Activated naive CD4-positive, alpha-beta T cell treated with anti-CD3 and anti-CD28 coated beads for 36 hours (primary cell): ENCODE measurements at regions of chr7 and their contacts with region 1.

Region 1: GRCh38 chr7:81482600-81483186 is 287.2 kb downstream of the HGF start:
- DNase-seq: no peak
- H3K4me3 Mint-ChIP-seq: no peak overlapping the region
- H3K27ac Mint-ChIP-seq: no peak overlapping the region
- H3K4me1 Mint-ChIP-seq: no peaks in the 10 kb centered on the region
- H3K27me3 Mint-ChIP-seq: no peaks in the 10 kb centered on the region

Region 2: DNA sequence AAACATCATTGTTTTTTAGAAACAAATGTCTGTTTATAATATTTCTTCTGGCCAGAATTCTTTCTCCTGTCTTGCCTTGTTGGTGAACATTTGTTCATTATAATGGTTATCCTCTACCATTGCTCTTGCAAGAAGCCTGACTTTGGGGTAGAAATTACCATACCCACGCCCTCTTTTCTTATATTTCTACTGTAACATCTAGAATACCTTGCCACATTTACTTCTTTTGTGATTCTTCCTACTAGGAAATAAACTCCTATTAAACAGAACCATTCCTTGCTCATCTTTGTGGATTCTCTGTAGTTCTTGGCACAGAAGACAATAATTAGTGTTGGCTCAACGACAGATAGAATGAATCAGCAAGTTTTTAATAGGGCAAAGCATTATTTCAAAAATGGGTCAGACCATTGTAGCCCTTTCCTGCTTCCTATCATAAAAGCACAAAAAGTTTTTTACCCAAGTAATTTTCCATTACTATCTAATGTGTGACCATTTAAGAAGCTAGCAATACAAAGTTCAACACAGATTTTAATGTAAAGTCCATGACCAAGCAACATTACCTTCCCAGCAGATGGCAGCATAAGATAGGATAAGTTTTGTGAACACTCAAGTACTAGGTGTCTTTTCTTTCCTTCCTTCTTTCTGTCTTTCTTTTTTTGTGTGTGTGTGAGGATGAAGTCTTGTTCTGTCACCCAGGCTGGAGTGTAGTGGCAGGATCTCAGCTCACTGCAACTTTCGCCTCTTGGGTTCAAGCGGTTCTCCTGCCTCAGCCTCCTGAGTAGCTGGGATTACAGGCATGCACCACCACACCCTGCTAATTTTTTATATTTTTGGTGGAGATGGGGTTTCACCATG is 16.8 kb after region 1 on chr7:
- CTCF ChIA-PET with region 1: interaction called, 12 read pairs
- intact Hi-C with region 1: no loop called
- DNase-seq: no peak
- H3K4me3 Mint-ChIP-seq: no peak overlapping the region
- H3K27ac Mint-ChIP-seq: no peak overlapping the region
- H3K4me1 Mint-ChIP-seq: no peaks in the 10 kb centered on the region
- H3K27me3 Mint-ChIP-seq: no peaks in the 10 kb centered on the region

Region 3: GRCh38 chr7:82017334-82017943 is 534.7 kb after region 1 on chr7:
- CTCF ChIA-PET with region 1: no interaction called
- intact Hi-C with region 1: loop called (anchors 10 kb)
- DNase-seq: no peak
- H3K4me3 Mint-ChIP-seq: no peak overlapping the region
- H3K27ac Mint-ChIP-seq: no peak overlapping the region
- H3K4me1 Mint-ChIP-seq: no peaks in the 10 kb centered on the region
- H3K27me3 Mint-ChIP-seq: no peaks in the 10 kb centered on the region

Region 4: DNA sequence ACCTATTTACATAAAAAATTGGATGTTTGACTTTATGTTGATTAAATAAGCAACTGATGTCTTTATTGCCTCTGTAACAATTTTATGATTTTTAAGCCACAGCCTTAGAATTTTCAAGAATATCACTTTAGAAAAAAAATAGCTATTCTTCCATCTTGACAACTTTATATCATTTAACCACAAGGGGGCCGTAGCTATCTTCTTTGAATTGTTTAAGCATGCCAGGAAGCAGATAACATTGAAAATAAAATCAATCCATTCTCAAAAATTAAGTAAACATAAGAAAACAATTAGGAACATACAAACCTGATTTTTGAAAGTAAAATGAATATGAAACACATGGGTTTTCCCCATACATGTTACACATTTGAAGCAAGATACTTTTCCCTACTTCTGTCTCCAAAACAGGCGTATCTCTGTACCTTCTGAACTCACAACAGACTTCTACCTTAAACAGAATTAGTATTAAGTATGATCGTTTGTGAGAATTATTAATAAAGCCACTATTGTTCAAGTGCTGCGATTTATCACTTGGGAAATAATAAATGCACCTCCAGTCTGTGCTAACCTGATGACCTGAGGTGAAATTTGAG is 751.9 kb after region 1 on chr7:
- CTCF ChIA-PET with region 1: no interaction called
- intact Hi-C with region 1: loop called (anchors 10 kb)
- DNase-seq: no peak
- H3K4me3 Mint-ChIP-seq: no peak overlapping the region
- H3K27ac Mint-ChIP-seq: no peak overlapping the region
- H3K4me1 Mint-ChIP-seq: no peaks in the 10 kb centered on the region
- H3K27me3 Mint-ChIP-seq: no peaks in the 10 kb centered on the region

Region 5: GRCh38 chr7:82572195-82572880 is 1089.6 kb after region 1 on chr7:
- CTCF ChIA-PET with region 1: no interaction called
- intact Hi-C with region 1: loop called (anchors 1 kb)
- DNase-seq: peak; percentile 84
- H3K4me3 Mint-ChIP-seq: no peak overlapping the region
- H3K27ac Mint-ChIP-seq: no peak overlapping the region
- H3K4me1 Mint-ChIP-seq: no peaks in the 10 kb centered on the region
- H3K27me3 Mint-ChIP-seq: no peaks in the 10 kb centered on the region

Region 6: DNA sequence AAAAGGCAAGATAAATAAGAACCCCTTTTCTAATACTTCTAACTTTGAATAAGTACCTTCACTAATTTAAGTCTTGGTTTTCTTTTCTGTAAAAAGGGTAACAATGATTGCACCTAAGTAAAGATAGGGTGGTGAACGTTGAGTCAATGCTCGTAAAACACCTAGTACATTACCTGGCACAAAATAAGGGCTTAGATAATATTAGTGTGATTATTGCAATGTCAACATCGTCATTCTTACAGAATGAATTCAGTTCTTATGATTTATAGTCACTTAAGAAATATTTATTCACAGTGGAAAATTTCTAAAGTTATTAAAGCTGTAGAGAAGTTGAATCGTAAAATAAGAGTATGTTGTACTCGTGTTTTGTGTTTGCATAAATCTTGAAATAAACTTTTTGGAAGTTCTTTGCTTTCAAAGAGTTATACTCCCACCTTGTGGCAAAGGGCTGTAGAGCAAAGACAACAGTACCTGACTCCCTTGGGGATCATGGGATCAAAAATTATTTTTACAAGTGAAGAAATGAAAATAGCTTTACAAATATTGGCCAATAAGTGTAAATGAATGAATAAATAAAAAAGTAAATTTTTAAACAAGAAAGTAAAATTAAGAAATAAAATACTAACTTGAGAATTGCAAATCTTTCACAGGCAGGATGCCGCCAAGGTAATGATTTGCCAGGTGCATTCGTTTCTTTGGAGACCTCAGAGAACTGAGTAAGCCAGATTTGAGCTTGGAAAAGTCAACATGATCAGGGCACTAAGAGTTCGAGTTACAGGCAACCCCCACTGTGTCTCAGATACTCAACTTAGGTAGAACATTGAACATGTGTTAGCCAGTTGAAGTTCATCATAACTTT is 1246.7 kb after region 1 on chr7:
- CTCF ChIA-PET with region 1: no interaction called
- intact Hi-C with region 1: loop called (anchors 2 kb)
- DNase-seq: no peak
- H3K4me3 Mint-ChIP-seq: no peak overlapping the region
- H3K27ac Mint-ChIP-seq: no peak overlapping the region
- H3K4me1 Mint-ChIP-seq: no peaks in the 10 kb centered on the region
- H3K27me3 Mint-ChIP-seq: no peaks in the 10 kb centered on the region